Posterior vena cava (tissue), 2 donors: ENCODE measurements at regions of chr11 and their contacts with region 1.

Region 1: DNA sequence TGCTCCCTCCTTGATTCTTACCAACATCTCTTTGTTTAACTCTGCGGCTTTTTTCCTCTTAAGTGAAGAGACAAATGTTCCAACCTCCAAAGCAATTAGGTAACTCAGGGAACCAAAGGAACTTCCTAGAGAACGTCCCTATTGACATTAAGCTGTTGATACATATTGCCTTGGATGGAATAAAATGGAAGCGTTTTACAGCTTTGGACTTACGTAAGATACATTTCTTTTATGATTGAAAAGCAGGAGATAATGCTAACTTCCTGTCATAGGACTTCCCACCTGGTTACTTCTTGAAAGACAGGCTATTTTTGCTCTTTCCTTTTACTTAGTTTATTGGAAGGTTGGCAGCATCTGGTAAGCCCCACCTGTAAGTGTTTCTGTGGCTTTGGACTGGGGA is 245.7 kb upstream of the CTSC start:
- DNase-seq: no peak

Region 2: DNA sequence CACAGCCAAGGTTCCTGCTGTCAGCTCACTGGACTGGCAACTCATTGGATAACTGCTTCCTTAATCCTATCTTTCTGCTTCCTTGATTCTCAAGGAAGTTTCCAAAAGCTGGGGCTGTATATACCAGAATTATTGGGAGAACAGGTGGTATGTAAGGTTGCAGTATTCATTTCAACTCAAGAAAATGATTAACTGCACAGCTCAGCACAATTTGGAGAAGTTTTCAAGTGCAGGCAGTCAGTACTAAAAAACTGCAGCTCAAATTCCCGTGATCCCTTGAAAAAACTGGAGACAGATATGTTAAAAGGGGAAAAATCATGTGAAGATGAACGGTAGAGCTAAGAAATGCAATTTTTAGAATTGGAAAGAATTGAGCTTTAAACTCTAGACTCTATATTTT is 438.1 kb after region 1 on chr11:
- intact Hi-C with region 1: loop called in 1 of 2 experiments (anchors 5 kb)
- DNase-seq: no peak